Activated T-helper 1 cell treated with anti-CD3 and anti-CD28 coated beads, Interleukin-12 subunit alpha, Interleukin-12 subunit beta, Interleukin-2, Interleukin-4 antibody, amounts not matched to agents 30 ng/mL and 10 ng/mL and 1 ng/mL, durations not matched to agents 14 hours and 24 hours and 36 hours (primary cell): ENCODE measurements at regions of chr12 and their contacts with region 1.

Region 1: GRCh38 chr12:132710422-132711168 is at the start of gene PGAM5:
- DNase-seq: peak; percentile 94
- H3K4me3 Mint-ChIP-seq: peak within 1 kb of the TSS; percentile 92
- H3K27ac Mint-ChIP-seq: peak within 1 kb of the TSS; percentile 96
- H3K4me1 Mint-ChIP-seq: peaks cover 15% of the 10 kb centered on the region
- H3K27me3 Mint-ChIP-seq: no peaks in the 10 kb centered on the region
- total RNA-seq, gene PGAM5: 107 and 111 TPM in 2 replicates

Region 2: DNA sequence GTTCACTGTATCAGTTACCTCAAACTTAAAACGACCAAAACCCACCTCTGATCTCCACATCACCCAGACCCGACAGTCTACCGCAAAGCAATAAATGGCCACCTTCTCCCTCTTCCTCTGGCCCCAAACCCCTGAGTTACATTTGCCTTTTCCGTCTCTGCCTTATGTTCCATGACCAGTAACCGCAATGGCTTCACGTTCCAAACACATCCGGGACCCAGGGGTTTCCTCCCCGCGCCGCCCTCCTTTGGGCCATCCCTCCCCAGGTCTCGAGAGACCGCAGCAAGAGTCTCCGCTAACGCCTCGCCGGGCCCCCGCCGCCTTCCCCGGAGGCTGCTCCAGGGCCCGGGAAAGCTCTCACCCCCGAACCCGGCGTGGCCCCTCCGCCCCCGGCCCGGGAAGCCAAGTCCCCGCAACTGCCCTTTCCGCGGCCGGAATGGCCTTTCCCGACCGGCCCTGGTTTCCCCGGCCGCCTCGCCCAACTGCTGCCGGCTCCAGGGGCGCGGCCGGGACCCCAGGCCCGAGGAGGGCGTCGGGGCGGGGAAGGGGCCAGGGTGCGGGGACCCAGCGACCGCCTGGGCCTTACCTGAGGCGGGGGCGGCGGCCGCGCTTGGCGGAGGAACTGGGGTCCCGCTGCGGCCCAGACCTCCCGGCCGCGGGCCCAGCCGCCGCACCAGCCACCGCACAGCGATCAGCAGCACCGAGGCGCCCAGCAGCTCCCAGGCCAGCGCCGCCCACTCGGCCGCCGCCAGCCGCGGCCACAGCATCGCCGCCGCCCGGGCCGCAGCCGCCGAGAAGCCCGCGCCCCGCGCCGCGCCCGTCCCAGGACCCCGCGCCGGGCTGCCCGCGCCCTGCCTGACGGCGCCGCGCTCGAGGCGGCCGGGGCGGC is 50.7 kb after region 1 on chr12 and contains the start of gene ANKLE2:
- intact Hi-C with region 1: loop called (anchors 1 kb)
- DNase-seq: peak; percentile 74
- H3K4me3 Mint-ChIP-seq: peak within 1 kb of the TSS; percentile 93
- H3K27ac Mint-ChIP-seq: peak within 1 kb of the TSS; percentile 96
- H3K4me1 Mint-ChIP-seq: peaks cover 24% of the 10 kb centered on the region
- H3K27me3 Mint-ChIP-seq: no peaks in the 10 kb centered on the region
- total RNA-seq, gene ANKLE2: 151 and 156 TPM in 2 replicates